GM10248 (cell line): ENCODE measurements at regions of chr11 and their contacts with region 1.

Region 1: DNA sequence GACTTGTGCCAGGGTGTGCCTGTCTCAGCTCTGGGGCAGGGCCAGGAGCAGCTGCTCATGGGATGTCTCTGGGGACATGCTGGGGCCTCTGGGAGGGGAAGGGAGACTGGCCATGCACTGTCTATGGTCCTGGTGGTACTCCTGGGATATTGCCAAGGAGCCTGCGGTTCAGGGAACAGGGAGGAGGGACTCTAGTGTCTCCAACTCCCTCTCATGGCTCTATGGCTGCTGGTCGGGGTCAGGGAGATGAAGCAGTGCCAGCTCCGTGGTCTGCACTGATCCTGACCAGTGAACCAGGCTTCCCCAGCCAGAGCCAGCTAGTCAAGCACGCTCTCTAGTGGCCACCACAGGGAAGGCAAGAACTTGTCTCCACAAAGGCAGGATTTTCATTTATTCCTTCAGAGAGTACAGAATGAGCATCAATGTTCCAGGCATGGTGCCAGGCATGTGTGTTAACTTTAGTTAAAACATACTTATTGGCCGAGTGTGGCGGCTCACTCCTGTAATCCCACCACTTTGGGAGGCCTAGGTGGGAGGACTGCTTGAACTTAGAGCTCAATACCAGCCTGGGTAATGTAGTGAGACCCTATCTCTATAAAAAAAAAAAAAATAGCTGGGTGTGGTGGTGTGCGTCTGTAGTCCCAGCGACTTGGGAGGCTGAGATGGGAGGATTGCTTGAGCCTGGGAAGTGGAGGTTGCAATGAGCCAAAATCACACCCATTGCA is 2.5 kb upstream of the BEST1 start:
- DNase-seq: peak; percentile 87
- CTCF ChIP-seq: peak; percentile 94

Region 2: GRCh38 chr11:61816736-61817455 is 130.8 kb before region 1 on chr11 and contains the start of gene FADS1:
- CTCF ChIA-PET with region 1: interaction called, 16 read pairs
- POLR2A ChIA-PET with region 1: no interaction called
- DNase-seq: peak; percentile 85
- CTCF ChIP-seq: peak; percentile 64

Region 3: DNA sequence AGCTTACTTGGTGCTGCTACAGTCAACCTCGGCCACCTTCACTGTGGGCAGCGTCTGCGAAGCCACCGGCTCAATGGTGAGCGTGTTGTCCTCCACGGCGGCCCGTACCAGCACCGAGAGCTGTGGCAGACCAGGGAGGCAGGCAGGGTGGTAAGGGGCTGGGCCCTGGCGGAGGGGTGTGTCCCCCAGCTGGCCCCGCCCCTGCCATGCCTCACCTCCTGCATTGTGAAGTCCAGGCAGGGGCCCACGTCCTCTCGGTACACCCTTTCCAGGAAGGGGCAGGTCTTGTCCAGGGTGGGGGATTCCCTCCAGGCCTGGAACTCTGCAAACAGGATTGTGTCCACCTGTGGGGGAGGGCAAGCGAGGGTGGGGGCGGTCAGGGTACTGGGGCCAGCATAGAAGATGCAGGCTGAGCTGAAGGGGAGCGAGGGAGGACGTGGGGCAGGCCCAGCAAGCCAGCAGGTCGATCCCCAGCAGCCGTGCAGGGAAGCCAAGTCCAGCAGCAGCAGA is 43.1 kb before region 1 on chr11:
- CTCF ChIA-PET with region 1: interaction called, 173 read pairs
- POLR2A ChIA-PET with region 1: interaction called, 3 read pairs
- DNase-seq: no peak
- CTCF ChIP-seq: no peak

Region 4: DNA sequence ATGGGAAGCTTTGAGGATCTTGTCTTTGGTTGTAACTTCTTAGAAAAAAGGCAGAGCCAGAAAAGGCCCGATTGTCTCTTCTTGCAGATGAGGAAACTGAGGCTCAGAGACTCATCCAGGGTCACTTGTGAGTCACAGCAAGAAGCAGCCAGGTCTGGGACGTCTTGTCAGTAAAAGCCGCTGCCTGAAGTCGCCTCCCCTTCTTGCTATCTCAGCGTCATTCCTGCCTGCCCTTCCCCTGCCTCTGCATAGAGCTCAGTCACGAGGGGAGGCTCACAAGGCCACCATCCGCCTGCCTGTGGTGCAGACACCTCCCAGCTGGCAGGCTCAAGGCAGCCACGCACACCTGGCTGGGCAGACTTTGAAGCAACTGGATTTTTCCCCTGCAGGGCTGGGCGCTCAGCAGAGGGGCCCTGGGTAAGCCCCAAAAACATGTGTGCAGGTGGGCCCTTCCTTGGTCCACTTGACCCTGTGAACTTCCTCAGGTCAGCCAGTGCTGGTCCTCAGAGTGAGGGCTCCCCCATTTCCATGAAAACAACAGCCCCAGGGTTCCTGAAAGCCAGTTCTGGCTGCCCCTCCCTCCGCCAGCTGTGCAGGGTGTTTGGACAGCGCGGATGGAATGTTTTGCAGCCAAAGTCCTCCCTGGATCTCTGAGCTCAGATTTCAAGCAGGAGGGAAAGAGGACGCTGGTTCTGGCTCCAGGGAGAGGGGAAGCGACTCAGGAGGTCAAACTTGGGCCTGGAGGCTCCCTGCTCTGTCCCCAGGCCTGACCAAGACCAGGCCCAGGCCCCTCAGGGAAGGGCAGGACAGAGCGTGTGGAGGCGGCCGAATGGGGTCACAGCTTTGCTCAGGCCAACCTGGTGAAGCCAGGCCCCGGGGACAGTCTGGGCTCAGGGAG is 24.2 kb before region 1 on chr11:
- CTCF ChIA-PET with region 1: interaction called, 21 read pairs
- POLR2A ChIA-PET with region 1: no interaction called
- DNase-seq: peak; percentile 15
- CTCF ChIP-seq: no peak

Region 5: GRCh38 chr11:61935861-61936260 is 11.8 kb before region 1 on chr11:
- CTCF ChIA-PET with region 1: interaction called, 36 read pairs
- POLR2A ChIA-PET with region 1: no interaction called
- DNase-seq: no peak
- CTCF ChIP-seq: no peak

Region 6: GRCh38 chr11:61978703-61979661 is 31.3 kb after region 1 on chr11:
- CTCF ChIA-PET with region 1: interaction called, 13 read pairs
- POLR2A ChIA-PET with region 1: no interaction called
- DNase-seq: no peak
- CTCF ChIP-seq: no peak

Region 7: GRCh38 chr11:62108017-62108750 is 160.5 kb after region 1 on chr11:
- CTCF ChIA-PET with region 1: interaction called, 38 read pairs
- POLR2A ChIA-PET with region 1: no interaction called
- DNase-seq: peak; percentile 56
- CTCF ChIP-seq: peak; percentile 76

Region 8: GRCh38 chr11:62573592-62574362 is 626.1 kb after region 1 on chr11 and contains the start of gene EEF1G:
- CTCF ChIA-PET with region 1: no interaction called
- POLR2A ChIA-PET with region 1: no interaction called
- DNase-seq: peak; percentile 99
- CTCF ChIP-seq: no peak